T-cell (primary cell): ENCODE measurements at regions of chr11 and their contacts with region 1.

Region 1: DNA sequence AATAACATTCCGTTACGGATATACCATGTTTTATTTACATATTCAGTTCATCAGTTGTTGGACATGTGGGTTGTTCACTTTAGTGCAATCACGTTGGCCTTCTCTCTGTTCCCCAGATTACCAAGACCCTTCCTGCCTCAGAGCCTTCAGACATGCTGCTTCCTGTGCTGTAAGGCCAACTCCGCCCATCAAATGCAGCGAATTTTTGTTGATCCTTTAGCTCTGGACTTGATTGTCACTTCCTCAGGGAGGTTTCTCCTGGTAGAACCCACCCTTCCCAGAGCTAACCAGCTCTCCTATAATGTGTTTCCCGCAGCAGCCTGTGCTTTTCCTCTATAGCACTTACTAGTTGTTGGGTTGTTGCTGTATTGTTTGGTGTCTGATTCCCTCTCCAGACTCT is 39.4 kb downstream of the SWAP70 start:
- DNase-seq: peak in 1 of 35 experiments; percentile 2
- ATAC-seq: peak in 1 of 4 experiments; percentile 44
- H3K4me3 ChIP-seq: no peak overlapping the region
- H3K4me3 Mint-ChIP-seq: peak overlapping the region in 1 of 3 donors; percentile 23
- H3K27ac ChIP-seq: no peak overlapping the region
- H3K27ac Mint-ChIP-seq: peak overlapping the region; percentile 29 to 44
- H3K4me1 ChIP-seq: peaks cover 4 to 27% of the 10 kb centered on the region in 2 experiments
- H3K4me1 Mint-ChIP-seq: peaks cover 23 to 38% (median 34%) of the 10 kb centered on the region in 3 donors
- H3K27me3 ChIP-seq: no peaks in the 10 kb centered on the region
- H3K27me3 Mint-ChIP-seq: no peaks in the 10 kb centered on the region

Region 2: DNA sequence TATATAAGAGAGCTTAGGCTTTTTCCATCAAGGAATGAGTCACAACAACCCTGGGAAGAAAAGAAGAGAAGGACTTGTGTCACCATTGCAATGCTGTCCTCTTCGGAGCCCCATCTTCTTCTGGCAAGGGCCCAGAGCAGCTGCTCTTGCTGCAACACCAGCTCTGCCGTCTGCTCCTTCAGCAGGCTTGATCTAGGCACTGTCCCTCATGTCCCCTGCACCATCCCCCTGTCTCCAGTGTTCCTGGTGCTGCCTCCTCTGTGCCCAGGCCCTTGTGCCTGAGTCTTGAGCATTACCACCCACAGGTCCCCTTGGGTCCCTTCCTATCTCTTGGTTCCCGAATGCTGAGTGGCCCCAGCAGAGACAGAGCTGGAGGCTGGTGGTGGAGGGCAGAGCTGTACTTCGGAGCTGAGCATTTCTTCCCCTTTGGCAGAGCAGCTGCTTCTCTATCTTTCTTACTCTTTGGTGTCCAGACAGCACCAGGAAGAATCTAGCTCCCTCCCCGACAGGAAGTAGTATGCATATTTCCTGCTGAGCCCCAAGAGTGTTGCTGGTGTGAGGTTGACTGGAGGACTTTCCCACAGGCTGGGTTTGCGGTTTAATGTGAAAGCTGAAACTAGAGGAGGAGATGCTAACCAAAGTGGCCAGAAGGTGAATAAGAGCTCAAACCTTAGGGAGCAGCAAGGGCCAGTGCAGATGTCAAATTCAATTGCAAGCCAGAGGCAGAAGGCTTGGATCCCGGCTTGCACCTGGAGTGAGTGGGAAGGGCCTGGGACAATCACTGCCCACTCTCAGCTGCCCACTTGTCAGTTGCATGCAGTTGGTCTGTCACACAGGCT is 102.0 kb before region 1 on chr11:
- CTCF ChIA-PET with region 1: no interaction called
- POLR2A ChIA-PET with region 1: no interaction called
- DNase-seq: peak; percentile 6 to 84 (median 40)
- ATAC-seq: peak; percentile 82 to 95 (median 94)
- H3K4me3 ChIP-seq: peak overlapping the region; percentile 25 to 49
- H3K4me3 Mint-ChIP-seq: peak overlapping the region; percentile 37 to 80 (median 72)
- H3K27ac ChIP-seq: peak overlapping the region; percentile 72
- H3K27ac Mint-ChIP-seq: peak overlapping the region; percentile 85 to 96
- H3K4me1 ChIP-seq: peaks cover 3 to 26% of the 10 kb centered on the region in 2 experiments
- H3K4me1 Mint-ChIP-seq: peaks cover 19 to 26% (median 25%) of the 10 kb centered on the region in 3 donors
- H3K27me3 ChIP-seq: no peaks in the 10 kb centered on the region
- H3K27me3 Mint-ChIP-seq: no peaks in the 10 kb centered on the region

Region 3: DNA sequence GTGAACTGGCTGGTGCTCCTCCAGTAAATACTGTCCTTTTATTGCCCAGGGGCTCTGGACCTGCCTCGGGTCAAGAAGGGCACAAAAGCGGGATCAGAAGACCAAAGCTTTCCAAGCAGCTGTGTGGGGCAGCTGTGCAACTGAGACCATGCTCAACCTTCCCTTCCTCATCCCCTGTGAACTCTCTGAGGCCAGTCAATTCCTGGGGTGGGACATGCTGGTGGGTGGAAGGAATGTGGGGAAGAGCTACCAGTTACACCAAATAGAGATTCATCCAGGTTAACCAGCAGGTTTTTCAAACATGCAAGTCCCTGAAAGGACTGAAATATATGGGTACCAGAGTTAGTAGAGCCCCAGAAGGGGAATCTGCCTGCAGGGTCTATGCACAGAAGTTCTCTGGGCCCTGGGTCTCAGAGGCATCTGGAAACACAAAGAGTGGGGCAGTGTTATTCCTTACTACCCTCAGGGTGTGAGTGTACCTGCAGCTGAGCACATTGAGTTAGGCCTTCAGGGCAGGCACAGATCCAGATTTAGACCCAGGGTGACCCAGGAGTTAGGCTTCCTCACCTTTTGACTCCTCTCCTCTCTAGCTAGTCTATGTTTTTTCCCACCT is 83.4 kb before region 1 on chr11:
- CTCF ChIA-PET with region 1: no interaction called
- POLR2A ChIA-PET with region 1: no interaction called
- DNase-seq: no peak
- ATAC-seq: no peak
- H3K4me3 ChIP-seq: no peak overlapping the region
- H3K4me3 Mint-ChIP-seq: no peak overlapping the region
- H3K27ac ChIP-seq: no peak overlapping the region
- H3K27ac Mint-ChIP-seq: no peak overlapping the region
- H3K4me1 ChIP-seq: no peaks in the 10 kb centered on the region
- H3K4me1 Mint-ChIP-seq: peaks cover 0 to 11% (median under 1%) of the 10 kb centered on the region in 3 donors
- H3K27me3 ChIP-seq: no peaks in the 10 kb centered on the region
- H3K27me3 Mint-ChIP-seq: no peaks in the 10 kb centered on the region

Region 4: DNA sequence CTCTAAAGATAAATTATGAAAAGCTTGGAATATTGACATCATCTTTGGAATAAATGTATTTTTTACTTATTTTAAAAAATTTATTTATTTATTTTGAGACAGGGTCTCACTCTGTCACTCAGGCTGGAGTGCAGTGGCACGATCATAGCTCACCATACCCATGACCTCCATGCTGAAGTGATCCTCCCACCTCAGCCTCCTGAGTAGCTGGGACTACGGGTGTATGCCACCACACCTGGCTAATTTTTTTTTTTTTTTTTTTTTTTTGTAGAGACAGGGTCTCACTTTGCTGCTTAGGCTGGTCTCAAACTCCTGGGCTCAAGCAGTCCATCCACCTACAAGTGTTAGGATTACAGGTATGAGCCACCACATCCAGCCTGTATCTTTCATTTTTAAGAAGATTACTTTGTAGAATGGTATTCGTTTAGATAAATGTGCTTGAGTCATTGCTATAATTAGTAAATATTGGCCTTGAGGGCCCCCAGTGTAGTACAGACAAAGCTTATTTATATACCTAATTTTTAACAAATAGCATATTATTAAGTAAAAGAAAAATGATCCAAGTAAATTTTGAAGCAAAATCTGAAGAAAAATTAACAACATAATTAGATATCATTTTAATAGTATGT is 30.9 kb before region 1 on chr11:
- CTCF ChIA-PET with region 1: no interaction called
- POLR2A ChIA-PET with region 1: interaction called in 1 of 2 experiments, 10 read pairs
- DNase-seq: no peak
- ATAC-seq: no peak
- H3K4me3 ChIP-seq: no peak overlapping the region
- H3K4me3 Mint-ChIP-seq: no peak overlapping the region
- H3K27ac ChIP-seq: no peak overlapping the region
- H3K27ac Mint-ChIP-seq: no peak overlapping the region
- H3K4me1 ChIP-seq: no peaks in the 10 kb centered on the region
- H3K4me1 Mint-ChIP-seq: peaks cover 0 to 7% (median 6%) of the 10 kb centered on the region in 3 donors
- H3K27me3 ChIP-seq: peaks cover 0 to under 1% of the 10 kb centered on the region in 2 experiments
- H3K27me3 Mint-ChIP-seq: peaks cover 0 to 3% of the 10 kb centered on the region in 2 donors